Endothelial cell of umbilical vein (primary cell): ENCODE measurements at regions of chr14 and their contacts with region 1.

Region 1: DNA sequence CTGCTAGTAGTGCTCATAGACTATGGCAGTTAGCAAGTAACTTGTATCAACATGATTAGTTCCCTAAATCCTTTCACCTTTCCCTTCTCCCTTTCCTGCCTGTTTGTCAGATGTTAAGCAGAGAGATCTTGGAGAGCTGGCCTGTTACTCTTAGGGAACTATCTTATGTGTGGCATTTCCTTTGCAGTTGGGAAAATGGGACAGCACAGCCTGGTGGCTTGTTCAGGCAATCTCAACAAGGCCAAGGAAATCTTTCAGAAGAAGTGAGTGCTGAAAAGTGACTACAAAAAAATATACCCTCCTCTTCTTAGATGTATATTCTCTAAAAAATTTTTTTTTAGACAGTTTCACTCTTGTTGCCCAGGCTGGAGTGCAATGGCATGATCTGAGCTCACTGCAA is 7.4 kb downstream of the PARP2 start:
- DNase-seq: peak; percentile 15
- H3K4me3 ChIP-seq: no peak overlapping the region
- H3K27ac ChIP-seq: no peak overlapping the region
- H3K4me1 ChIP-seq: peaks cover 12% of the 10 kb centered on the region
- H3K27me3 ChIP-seq: no peaks in the 10 kb centered on the region
- CTCF ChIP-seq: peak; percentile 15 to 22
- POLR2A ChIP-seq: no peak

Region 2: GRCh38 chr14:20019257-20019865 is 331.5 kb before region 1 on chr14 and contains the start of gene OR4K14:
- CTCF ChIA-PET with region 1: no interaction called
- POLR2A ChIA-PET with region 1: no interaction called
- dilution Hi-C with region 1: no loop called
- intact Hi-C with region 1: no loop called
- DNase-seq: no peak
- H3K4me3 ChIP-seq: no peak within 1 kb of the TSS
- H3K27ac ChIP-seq: no peak within 1 kb of the TSS
- H3K4me1 ChIP-seq: no peaks in the 10 kb centered on the region
- H3K27me3 ChIP-seq: no peaks in the 10 kb centered on the region
- CTCF ChIP-seq: no peak
- POLR2A ChIP-seq: no peak
- total RNA-seq, gene OR4K14: not detected in 2 replicates

Region 3: DNA sequence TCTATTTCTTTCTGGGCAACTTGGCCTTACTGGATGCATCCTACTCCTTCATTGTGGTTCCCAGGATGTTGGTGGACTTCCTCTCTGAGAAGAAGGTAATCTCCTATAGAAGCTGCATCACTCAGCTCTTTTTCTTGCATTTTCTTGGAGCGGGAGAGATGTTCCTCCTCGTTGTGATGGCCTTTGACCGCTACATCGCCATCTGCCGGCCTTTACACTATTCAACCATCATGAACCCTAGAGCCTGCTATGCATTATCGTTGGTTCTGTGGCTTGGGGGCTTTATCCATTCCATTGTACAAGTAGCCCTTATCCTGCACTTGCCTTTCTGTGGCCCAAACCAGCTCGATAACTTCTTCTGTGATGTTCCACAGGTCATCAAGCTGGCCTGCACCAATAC is 206.9 kb before region 1 on chr14:
- CTCF ChIA-PET with region 1: no interaction called
- POLR2A ChIA-PET with region 1: no interaction called
- dilution Hi-C with region 1: no loop called
- intact Hi-C with region 1: no loop called
- DNase-seq: no peak
- H3K4me3 ChIP-seq: no peak overlapping the region
- H3K27ac ChIP-seq: no peak overlapping the region
- H3K4me1 ChIP-seq: no peaks in the 10 kb centered on the region
- H3K27me3 ChIP-seq: no peaks in the 10 kb centered on the region
- CTCF ChIP-seq: no peak
- POLR2A ChIP-seq: no peak

Region 4: DNA sequence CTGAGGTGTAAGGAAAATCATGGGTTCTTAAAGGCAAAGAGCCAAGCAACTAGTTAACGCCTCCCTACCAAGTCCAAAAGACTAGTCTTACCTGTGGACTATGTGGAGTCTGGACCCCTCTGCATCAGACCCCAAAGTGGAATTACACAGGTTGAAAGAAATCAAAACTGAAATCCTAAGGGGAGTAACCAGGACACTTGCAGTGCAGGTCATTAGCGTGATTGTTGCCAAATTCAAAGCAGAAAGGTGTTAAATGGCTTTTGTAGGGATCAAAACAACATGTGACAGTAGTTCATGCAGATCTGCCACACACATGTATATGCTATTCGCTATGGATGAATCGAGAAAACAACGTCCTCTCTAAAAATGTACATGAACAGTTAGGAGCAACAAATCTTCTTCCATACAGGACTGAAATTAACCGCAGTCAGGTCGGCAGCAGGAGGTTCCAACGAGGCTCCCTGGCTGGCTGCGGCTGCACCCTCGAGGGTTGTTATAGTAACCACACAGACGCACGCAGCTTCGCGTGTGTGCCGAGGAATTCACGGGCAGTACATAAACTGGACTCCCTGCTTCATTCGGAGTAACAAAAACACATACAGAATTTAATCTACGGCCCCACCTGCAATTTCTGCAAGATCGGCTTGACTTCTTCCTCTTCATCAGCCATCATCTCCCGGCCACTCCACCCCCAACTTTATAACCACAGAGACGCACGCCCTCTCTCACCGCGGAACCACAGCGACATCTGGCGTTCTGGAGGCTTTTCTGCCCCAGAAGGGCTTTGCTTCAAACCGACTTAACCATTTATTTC is 45.4 kb before region 1 on chr14 and contains the start of gene TTC5:
- CTCF ChIA-PET with region 1: no interaction called
- POLR2A ChIA-PET with region 1: no interaction called
- dilution Hi-C with region 1: no loop called
- intact Hi-C with region 1: no loop called
- DNase-seq: peak; percentile 92
- H3K4me3 ChIP-seq: peak within 1 kb of the TSS; percentile 63 to 100 (median 99)
- H3K27ac ChIP-seq: peak within 1 kb of the TSS; percentile 50
- H3K4me1 ChIP-seq: peaks cover 9% of the 10 kb centered on the region
- H3K27me3 ChIP-seq: no peaks in the 10 kb centered on the region
- CTCF ChIP-seq: peak; percentile 92 to 97
- POLR2A ChIP-seq: peak; percentile 77
- total RNA-seq, gene TTC5: 21.3 and 22.9 TPM in 2 replicates

Region 5: DNA sequence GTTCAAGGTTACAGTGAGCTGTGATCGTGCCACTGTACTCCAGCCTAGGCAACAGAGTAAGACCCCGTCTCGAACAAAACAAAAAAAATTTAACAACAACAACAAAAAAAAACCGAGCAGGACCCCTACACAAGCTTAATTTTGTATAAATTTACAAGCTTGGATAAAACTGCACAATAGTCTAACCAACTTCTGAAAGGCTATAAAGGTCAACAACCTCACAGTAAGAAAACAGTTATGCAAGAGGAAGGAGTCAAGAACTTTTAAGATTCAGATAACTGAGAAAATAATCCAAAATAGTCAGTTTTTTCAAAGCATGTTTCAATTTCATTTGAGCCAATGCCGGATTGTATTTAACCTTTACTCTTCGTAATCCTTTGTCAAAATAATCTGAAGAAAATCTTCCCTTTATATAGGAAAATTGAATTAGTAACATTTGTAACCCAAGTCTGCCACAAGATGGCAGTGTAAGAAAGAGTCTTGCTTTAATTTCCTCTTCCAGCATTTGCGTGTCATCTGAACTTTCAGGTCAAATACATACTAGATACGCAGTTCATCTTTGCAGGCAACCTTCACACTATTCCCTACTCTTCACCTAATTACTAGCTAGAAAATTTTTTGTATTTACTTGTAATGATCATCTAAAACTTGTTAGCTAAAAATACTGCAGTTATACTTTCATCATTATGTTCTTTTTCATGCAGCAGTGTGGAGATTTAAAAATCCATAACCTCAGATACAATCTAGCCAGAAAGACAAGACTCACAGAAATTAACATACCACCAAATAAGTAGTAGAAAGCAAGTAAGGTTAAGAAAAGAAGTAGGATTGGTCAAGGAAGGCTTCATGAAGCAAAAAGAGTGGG is 23.6 kb before region 1 on chr14:
- CTCF ChIA-PET with region 1: interaction called, 73 read pairs
- POLR2A ChIA-PET with region 1: no interaction called
- dilution Hi-C with region 1: no loop called
- intact Hi-C with region 1: loop called (anchors 1 kb)
- DNase-seq: peak; percentile 75
- H3K4me3 ChIP-seq: no peak overlapping the region
- H3K27ac ChIP-seq: no peak overlapping the region
- H3K4me1 ChIP-seq: peaks cover 18% of the 10 kb centered on the region
- H3K27me3 ChIP-seq: no peaks in the 10 kb centered on the region
- CTCF ChIP-seq: peak; percentile 42 to 56
- POLR2A ChIP-seq: no peak

Region 6: DNA sequence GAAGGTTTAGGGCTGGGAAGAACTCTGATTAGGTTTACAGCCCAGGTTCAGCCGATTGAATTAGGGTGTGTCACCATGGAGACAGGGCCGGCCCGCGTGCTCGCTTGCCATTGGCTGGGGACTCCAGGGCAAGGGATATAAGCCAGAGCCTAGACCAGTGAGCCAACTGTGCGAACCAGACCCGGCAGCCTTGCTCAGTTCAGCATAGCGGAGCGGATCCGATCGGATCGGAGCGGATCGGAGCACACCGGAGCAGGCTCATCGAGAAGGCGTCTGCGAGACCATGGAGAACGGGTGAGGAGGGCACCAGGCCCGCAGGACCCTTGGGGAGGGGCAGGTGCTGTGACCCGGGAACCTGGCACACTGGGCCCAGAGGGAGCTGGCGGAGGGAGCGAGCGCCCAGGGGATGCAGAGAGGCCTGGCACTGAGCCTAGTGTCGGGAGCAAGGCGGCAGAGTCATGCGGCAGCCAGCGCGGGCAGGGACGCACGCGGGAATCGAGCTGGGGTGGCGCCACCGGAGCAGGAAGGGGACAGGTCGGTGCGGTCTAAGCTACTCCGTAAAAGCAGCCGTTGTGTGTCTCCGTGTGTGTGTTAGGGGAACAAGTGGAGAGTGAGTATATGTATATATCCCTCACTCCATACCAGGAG is 118.5 kb after region 1 on chr14 and contains the start of gene PNP:
- CTCF ChIA-PET with region 1: no interaction called
- POLR2A ChIA-PET with region 1: no interaction called
- dilution Hi-C with region 1: loop called (anchors 10 kb)
- intact Hi-C with region 1: no loop called
- DNase-seq: peak; percentile 89
- H3K4me3 ChIP-seq: peak within 1 kb of the TSS; percentile 60 to 94 (median 77)
- H3K27ac ChIP-seq: peak within 1 kb of the TSS; percentile 76
- H3K4me1 ChIP-seq: peaks cover 24% of the 10 kb centered on the region
- H3K27me3 ChIP-seq: peaks cover 2 to 6% of the 10 kb centered on the region in 2 experiments
- CTCF ChIP-seq: no peak
- POLR2A ChIP-seq: peak; percentile 99
- total RNA-seq, gene PNP: 189 and 271 TPM in 2 replicates

Region 7: DNA sequence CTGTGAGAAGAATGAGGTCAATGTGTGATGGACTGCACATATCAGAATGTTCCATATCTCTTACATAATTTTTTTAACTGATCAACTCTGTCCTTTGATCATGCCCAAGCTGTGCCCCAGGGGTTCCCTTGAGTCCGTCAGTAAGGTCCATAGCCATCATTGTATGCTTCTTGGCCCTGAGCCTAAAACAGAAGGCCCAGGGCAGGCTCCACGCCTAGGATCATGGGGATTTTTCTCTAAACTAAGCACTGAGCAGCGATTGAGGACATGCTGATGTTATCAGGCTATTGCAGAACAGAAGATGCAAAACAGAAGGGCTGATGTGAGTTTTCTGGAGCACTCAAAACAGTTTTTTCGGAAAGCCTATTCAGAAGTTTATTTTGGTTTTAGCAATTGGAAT is 189.0 kb after region 1 on chr14:
- CTCF ChIA-PET with region 1: no interaction called
- POLR2A ChIA-PET with region 1: no interaction called
- dilution Hi-C with region 1: loop called (anchors 10 kb)
- intact Hi-C with region 1: no loop called
- DNase-seq: no peak
- H3K4me3 ChIP-seq: no peak overlapping the region
- H3K27ac ChIP-seq: no peak overlapping the region
- H3K4me1 ChIP-seq: no peaks in the 10 kb centered on the region
- H3K27me3 ChIP-seq: peaks cover 0 to 6% of the 10 kb centered on the region in 2 experiments
- CTCF ChIP-seq: no peak
- POLR2A ChIP-seq: no peak

Region 8: DNA sequence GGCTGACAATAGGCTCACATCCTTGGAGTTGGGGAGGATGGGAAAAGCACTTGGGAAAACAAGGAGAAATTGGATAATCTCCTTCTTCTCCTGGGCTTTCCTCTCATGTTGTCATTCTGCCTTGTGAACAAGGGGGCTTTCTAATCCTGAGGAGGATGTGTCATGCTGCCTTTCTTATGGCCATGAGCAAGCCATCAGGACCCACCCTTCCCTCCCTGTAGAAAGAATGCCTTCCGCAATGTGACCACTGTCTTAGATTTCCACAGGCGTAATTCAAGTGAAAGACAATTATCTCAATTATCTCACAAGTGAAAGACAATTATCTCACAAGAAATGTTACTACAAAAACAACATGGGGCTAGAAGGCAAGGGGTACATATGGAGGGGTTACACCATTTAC is 293.7 kb after region 1 on chr14:
- CTCF ChIA-PET with region 1: no interaction called
- POLR2A ChIA-PET with region 1: no interaction called
- dilution Hi-C with region 1: no loop called
- intact Hi-C with region 1: no loop called
- DNase-seq: no peak
- H3K4me3 ChIP-seq: no peak overlapping the region
- H3K27ac ChIP-seq: no peak overlapping the region
- H3K4me1 ChIP-seq: no peaks in the 10 kb centered on the region
- H3K27me3 ChIP-seq: peaks cover 12 to 17% of the 10 kb centered on the region in 2 experiments
- CTCF ChIP-seq: no peak
- POLR2A ChIP-seq: no peak